Mammary epithelial cell (primary cell): ENCODE measurements at regions of chr4 and their contacts with region 1.

Region 1: GRCh38 chr4:12844141-12844540 is 640.0 kb downstream of the RAB28 start:
- DNase-seq: peak; percentile 6
- H3K4me3 ChIP-seq: no peak overlapping the region
- H3K27ac ChIP-seq: no peak overlapping the region
- H3K4me1 ChIP-seq: no peaks in the 10 kb centered on the region
- H3K27me3 ChIP-seq: no peaks in the 10 kb centered on the region
- CTCF ChIP-seq: no peak

Region 2: DNA sequence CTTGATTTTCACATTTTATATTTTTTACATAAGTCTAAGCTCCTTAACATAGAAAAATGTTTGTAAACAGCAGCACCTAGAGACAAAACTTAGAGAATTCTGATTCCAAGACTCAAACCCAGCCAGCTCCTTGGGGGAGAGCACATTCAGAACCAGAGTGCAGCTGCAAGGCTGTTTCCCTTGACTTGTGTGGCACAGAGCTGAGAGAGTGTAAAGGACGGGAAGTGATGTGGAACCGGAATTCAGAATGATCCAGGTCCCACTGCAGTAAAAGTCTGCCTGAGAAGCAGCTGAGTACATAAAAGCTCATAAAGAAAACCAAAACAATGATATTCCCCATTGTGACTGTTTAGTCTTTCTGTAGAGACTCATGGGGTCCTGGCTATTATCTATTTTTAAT is 73.8 kb before region 1 on chr4:
- CTCF ChIA-PET with region 1: no interaction called
- dilution Hi-C with region 1: no loop called
- in situ Hi-C with region 1: no loop called
- intact Hi-C with region 1: no loop called
- DNase-seq: no peak
- H3K4me3 ChIP-seq: no peak overlapping the region
- H3K27ac ChIP-seq: no peak overlapping the region
- H3K4me1 ChIP-seq: no peaks in the 10 kb centered on the region
- H3K27me3 ChIP-seq: no peaks in the 10 kb centered on the region
- CTCF ChIP-seq: no peak

Region 3: GRCh38 chr4:12873351-12873750 is 29.2 kb after region 1 on chr4:
- CTCF ChIA-PET with region 1: no interaction called
- dilution Hi-C with region 1: loop called (anchors 5 kb)
- in situ Hi-C with region 1: no loop called
- intact Hi-C with region 1: no loop called
- DNase-seq: no peak
- H3K4me3 ChIP-seq: no peak overlapping the region
- H3K27ac ChIP-seq: no peak overlapping the region
- H3K4me1 ChIP-seq: no peaks in the 10 kb centered on the region
- H3K27me3 ChIP-seq: no peaks in the 10 kb centered on the region
- CTCF ChIP-seq: no peak